GM12878 (cell line): ENCODE measurements at regions of chr4 and their contacts with region 1.

Region 1: GRCh38 chr4:153115322-153116290 is 88.6 kb upstream of the TRIM2 start:
- DNase-seq: peak; percentile 79
- ATAC-seq: peak; percentile 94
- H3K4me3 ChIP-seq: peak overlapping the region; percentile 40; the same call in 1 of the 2 replicates
- H3K27ac ChIP-seq: no peak overlapping the region
- H3K4me1 ChIP-seq: peaks cover 8% of the 10 kb centered on the region; the same call in 1 of the 2 replicates
- H3K27me3 ChIP-seq: peaks cover 0 to 2% of the 10 kb centered on the region in 2 experiments; a peak in 1 of 4 replicates
- CTCF ChIP-seq: no peak
- EP300 ChIP-seq: no peak
- POLR2A ChIP-seq: no peak
- RAD21 ChIP-seq: no peak

Region 2: DNA sequence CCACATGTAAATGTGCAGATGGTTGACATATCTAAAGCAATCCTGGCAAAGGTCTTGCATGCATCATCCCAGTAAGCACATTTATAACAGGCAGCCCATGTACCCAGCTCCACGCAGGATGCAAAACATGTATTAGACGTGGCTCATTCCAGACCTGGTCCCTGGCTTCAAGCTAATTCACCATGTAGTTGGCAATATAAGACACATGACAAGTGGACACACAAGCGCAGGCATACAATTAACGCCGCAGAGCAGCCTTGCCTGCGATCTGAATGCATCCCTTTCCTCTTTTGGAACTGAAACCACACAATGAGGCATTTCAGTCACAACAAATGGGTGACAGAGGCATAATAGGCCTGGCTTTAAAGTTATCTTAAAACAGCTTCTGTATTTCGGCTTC is 25.9 kb before region 1 on chr4:
- CTCF ChIA-PET with region 1: interaction called, 7 read pairs
- POLR2A ChIA-PET with region 1: no interaction called
- RAD21 ChIA-PET with region 1: interaction called, 3 read pairs
- SMC1A ChIA-PET with region 1: interaction called, 4 read pairs
- in situ Hi-C with region 1: no loop called
- intact Hi-C with region 1: loop called (anchors 1 kb)
- DNase-seq: no peak
- ATAC-seq: no peak
- H3K4me3 ChIP-seq: no peak overlapping the region
- H3K27ac ChIP-seq: no peak overlapping the region
- H3K4me1 ChIP-seq: no peaks in the 10 kb centered on the region
- H3K27me3 ChIP-seq: no peaks in the 10 kb centered on the region
- CTCF ChIP-seq: no peak
- EP300 ChIP-seq: no peak
- POLR2A ChIP-seq: no peak
- RAD21 ChIP-seq: no peak

Region 3: DNA sequence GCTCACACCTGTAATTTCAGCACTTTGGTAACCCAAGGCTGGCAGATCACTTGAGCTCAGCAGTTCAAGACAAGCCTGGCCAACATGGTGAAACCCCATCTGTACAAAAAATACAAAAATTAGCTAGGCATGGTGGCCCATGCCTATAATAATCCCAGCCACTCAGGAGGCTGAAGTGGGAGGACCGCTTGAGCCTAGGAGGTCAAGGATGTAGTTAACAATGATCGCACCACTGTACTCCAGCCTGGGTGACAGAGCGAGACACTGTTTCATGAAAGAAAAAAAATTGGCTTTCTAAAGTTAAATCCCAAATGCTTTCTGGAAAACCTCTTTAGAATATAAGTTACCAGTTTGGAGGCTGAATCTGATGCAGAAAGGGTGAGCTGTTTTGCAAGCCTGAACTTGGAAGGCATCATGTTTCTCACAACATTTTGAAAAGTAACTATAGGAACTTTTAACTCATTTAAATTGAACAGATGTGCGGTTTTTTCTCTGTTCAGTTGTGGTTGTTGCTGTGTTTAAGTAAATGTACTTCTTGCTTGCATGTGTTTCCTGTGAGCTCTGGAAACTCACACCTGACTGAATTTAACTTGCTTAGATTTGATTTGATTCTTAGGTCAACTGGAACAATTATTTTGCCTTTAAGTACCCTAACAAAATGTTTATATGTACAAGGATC is 310.7 kb after region 1 on chr4:
- CTCF ChIA-PET with region 1: no interaction called
- POLR2A ChIA-PET with region 1: no interaction called
- RAD21 ChIA-PET with region 1: no interaction called
- SMC1A ChIA-PET with region 1: no interaction called
- in situ Hi-C with region 1: no loop called
- intact Hi-C with region 1: no loop called
- DNase-seq: no peak
- ATAC-seq: peak; percentile 58
- H3K4me3 ChIP-seq: no peak overlapping the region
- H3K27ac ChIP-seq: 0 out of 2 replicates have a peak overlapping the region, but pooled peaks have one; percentile 4
- H3K4me1 ChIP-seq: peaks cover 20% of the 10 kb centered on the region
- H3K27me3 ChIP-seq: no peaks in the 10 kb centered on the region
- CTCF ChIP-seq: no peak
- EP300 ChIP-seq: no peak
- POLR2A ChIP-seq: no peak
- RAD21 ChIP-seq: no peak

Region 4: DNA sequence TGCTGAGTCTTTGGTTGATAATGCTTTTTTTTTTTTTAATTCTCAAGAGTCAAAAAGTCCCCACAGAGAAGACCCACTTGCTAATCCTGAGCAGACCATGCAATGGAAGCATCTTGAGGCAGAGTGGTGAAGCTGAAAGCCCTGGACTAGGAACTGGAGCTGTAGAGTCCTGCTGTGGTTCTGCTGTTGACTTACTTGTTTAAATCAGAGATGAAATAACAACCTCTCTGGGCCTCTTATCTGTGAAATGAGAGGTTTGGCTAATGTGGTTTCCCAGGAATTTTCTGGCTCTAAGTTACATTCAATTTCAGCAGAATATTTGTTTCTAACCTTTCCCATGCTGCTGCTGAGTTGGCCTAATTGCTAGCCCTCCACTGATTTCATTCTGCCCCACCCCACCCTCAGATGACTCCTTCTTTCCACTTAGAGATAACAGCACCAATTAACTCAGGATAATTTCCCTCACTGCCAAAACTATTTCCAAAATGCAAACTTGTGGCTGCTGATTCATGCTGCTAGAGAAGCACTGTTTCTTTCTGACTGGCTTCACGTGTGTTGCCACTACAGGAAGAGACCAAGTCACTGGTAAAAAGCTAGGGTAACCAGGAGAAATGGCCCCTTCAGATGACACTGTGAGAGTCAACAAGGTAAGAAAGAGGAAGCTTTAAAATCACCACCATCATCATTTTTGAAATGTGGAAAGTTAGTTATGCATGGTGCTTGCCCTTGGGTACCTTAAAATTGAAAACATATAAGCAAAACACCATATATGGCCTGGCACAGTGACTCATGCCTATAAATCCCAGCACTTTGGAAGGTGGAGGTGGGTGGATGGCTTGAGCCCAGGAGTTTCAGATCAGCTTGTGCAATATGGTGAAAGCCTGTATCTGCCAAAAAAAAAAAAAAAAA is 1049.6 kb after region 1 on chr4:
- CTCF ChIA-PET with region 1: no interaction called
- POLR2A ChIA-PET with region 1: no interaction called
- RAD21 ChIA-PET with region 1: no interaction called
- SMC1A ChIA-PET with region 1: no interaction called
- in situ Hi-C with region 1: no loop called
- intact Hi-C with region 1: no loop called
- DNase-seq: peak; percentile 69
- ATAC-seq: peak; percentile 82
- H3K4me3 ChIP-seq: no peak overlapping the region
- H3K27ac ChIP-seq: no peak overlapping the region
- H3K4me1 ChIP-seq: no peaks in the 10 kb centered on the region
- H3K27me3 ChIP-seq: peaks cover 0 to 4% of the 10 kb centered on the region in 2 experiments; a peak in 1 of 4 replicates
- CTCF ChIP-seq: no peak
- EP300 ChIP-seq: no peak
- POLR2A ChIP-seq: no peak
- RAD21 ChIP-seq: no peak